Breast epithelium (tissue), 4 donors: ENCODE measurements at regions of chr9 and their contacts with region 1.

Region 1: GRCh38 chr9:69471433-69471832 is 146.4 kb downstream of the ENTREP1 start:
- DNase-seq: no peak
- H3K4me3 ChIP-seq: no peak overlapping the region
- H3K27ac ChIP-seq: no peak overlapping the region
- H3K4me1 ChIP-seq: no peaks in the 10 kb centered on the region
- H3K27me3 ChIP-seq: no peaks in the 10 kb centered on the region
- CTCF ChIP-seq: no peak
- POLR2A ChIP-seq: no peak

Region 2: DNA sequence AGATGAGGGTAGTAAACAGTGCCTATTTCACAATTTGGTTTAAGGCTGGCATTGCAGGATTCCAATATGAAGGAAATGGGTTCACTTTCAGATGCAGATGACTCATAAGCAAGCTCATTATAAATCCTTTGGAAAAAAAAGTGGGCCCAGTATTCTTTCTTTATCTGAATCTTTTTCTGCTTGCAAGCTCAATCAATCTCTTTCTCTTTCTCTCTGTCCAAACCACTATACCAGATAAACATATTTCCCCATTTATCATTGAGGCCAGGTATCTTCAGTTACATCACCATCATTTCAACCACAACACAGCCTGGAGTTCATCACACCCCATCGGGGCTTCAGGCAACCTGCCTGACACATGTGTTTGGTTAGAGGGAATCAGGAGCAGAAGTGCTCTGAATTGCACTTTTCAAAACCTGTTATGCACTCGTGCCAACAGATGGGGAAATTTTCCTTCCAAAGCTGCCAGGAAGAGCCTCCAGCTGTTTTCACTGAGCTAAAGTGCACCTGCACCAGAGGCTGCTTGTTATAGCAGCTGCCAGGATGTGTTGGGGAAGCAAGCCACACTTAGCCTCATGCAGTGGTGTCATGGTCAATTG is 542.3 kb after region 1 on chr9:
- intact Hi-C with region 1: loop called (anchors 5 kb)
- DNase-seq: no peak
- H3K4me3 ChIP-seq: no peak overlapping the region
- H3K27ac ChIP-seq: no peak overlapping the region
- H3K4me1 ChIP-seq: no peaks in the 10 kb centered on the region
- H3K27me3 ChIP-seq: no peaks in the 10 kb centered on the region
- CTCF ChIP-seq: no peak
- POLR2A ChIP-seq: no peak